HEK293T (cell line): ENCODE measurements at regions of chr2 and their contacts with region 1.

Region 1: GRCh38 chr2:240060977-240061591 is 7.8 kb upstream of the OR6B3 start:
- DNase-seq: peak; percentile 39

Region 2: GRCh38 chr2:240143801-240144648 is 82.9 kb after region 1 on chr2:
- CTCF ChIA-PET with region 1: interaction called, 24 read pairs
- POLR2A ChIA-PET with region 1: interaction called, 4 read pairs
- DNase-seq: peak; percentile 84